ENCODE measurements at regions of chr18 and their contacts with region 1.

Region 1: DNA sequence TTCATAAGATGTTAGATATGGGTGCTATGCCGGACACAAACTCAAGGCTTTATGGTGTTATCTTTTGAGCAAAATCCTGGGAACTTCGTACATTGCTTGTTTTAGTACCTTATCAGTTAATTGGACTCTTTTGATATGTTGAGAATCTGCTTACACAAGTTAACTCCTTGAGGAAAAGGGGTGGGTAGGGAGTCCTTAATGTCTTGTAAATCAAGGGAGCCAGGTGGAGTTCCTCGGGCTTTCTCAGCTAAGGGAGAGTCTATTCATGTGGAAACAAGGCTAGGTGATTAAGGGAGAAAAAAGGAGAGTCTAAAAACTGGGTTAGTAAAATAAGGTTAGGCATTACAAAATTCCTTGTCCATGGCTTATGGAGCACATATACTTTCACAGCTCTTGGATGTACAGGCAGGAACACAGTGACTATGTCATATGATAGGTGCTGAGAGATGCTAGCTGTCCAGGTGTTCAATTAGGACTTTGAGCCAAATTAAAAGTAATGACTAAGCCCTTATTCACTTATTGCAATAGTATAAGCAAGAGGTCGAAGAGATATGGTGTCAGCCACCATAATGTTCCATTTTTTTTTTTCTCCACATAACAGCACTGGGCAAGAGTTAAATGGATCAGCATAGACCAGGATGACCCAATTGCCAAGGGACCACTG is 59.5 kb upstream of the DYNAP start:
- DNase-seq: peak in 1 of 2 experiments; percentile 63
- H3K4me3 ChIP-seq: peak overlapping the region in 3 of 4 experiments; percentile 3 to 55 (median 5); a peak in 3 of 8 replicates
- H3K27ac ChIP-seq: peak overlapping the region; percentile 69; the same call in 1 of the 2 replicates
- H3K4me1 ChIP-seq: peaks cover 13 to 28% (median 23%) of the 10 kb centered on the region in 4 experiments
- H3K27me3 ChIP-seq: no peaks in the 10 kb centered on the region
- CTCF ChIP-seq: no peak
- EP300 ChIP-seq: no peak; a peak in 1 of 3 replicates
- POLR2A ChIP-seq: peak in 1 of 2 experiments; percentile 33; a peak in 2 of 3 replicates
- RAD21 ChIP-seq: no peak

Region 2: GRCh38 chr18:54515149-54515548 is 16.4 kb before region 1 on chr18:
- CTCF ChIA-PET with region 1: no interaction called
- POLR2A ChIA-PET with region 1: interaction called, 16 read pairs
- DNase-seq: no peak
- H3K4me3 ChIP-seq: no peak overlapping the region
- H3K27ac ChIP-seq: no peak overlapping the region
- H3K4me1 ChIP-seq: peaks cover 0 to 3% (median 0%) of the 10 kb centered on the region in 4 experiments; a peak in 2 of 7 replicates
- H3K27me3 ChIP-seq: no peaks in the 10 kb centered on the region
- CTCF ChIP-seq: no peak
- EP300 ChIP-seq: no peak
- POLR2A ChIP-seq: no peak
- RAD21 ChIP-seq: no peak

Region 3: DNA sequence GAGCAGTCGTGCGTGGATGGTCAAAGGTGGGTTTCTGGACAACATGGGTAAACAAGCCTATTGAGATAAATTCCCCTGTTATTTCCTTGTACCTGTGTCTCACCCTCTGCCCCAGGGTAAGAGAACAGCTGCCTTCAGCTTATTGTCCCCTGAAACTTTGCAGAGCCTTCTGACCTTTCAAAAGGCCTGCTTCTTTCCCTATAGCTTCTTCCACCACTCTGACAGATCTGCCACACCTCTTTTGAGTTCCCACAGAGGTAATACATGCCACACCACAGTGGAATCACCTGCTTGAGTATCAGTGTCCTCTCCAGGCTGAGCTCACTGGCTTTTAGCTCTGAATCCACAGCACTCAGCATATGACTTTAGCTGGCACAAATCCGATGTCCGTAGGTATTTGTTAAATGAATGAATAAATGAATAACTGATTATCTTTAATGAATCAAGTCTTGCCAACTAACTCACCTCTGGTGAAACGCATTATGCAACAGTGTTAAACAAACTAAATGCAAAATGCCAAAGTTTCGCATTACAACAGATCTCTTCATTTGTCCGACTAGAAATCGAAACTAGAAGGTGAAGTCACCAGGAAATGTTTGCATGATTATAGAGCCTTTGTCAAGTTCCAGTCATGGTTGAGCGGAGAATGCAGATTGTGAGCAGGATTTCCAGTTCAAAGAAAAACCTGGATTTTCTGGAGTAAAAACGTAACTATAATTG is 75.8 kb after region 1 on chr18:
- CTCF ChIA-PET with region 1: no interaction called
- POLR2A ChIA-PET with region 1: interaction called, 15 read pairs
- DNase-seq: peak; percentile 38 to 53
- H3K4me3 ChIP-seq: peak overlapping the region in 1 of 4 experiments; percentile 31; a peak in 1 of 8 replicates
- H3K27ac ChIP-seq: peak overlapping the region; percentile 82
- H3K4me1 ChIP-seq: peaks cover 2 to 17% (median 16%) of the 10 kb centered on the region in 4 experiments; a peak in 5 of 7 replicates
- H3K27me3 ChIP-seq: no peaks in the 10 kb centered on the region
- CTCF ChIP-seq: no peak
- EP300 ChIP-seq: peak in 1 of 2 experiments; percentile 89; a peak in 1 of 3 replicates
- POLR2A ChIP-seq: no peak; a peak in 1 of 3 replicates
- RAD21 ChIP-seq: no peak